H1 (cell line): ENCODE measurements at regions of chr2 and their contacts with region 1.

Region 1: GRCh38 chr2:74147727-74148456 is at the start of gene BOLA3:
- DNase-seq: peak; percentile 49 to 94
- H3K4me3 ChIP-seq: peak within 1 kb of the TSS; percentile 68 to 93 (median 74)
- H3K27ac ChIP-seq: peak within 1 kb of the TSS; percentile 35; the same call in 1 of the 2 replicates
- H3K4me1 ChIP-seq: peaks cover 0 to 8% (median 2%) of the 10 kb centered on the region in 4 experiments; a peak in 4 of 7 replicates
- H3K27me3 ChIP-seq: no peaks in the 10 kb centered on the region
- CTCF ChIP-seq: peak; percentile 55 to 79 (median 58)
- EP300 ChIP-seq: no peak
- POLR2A ChIP-seq: peak; percentile 81 to 91
- RAD21 ChIP-seq: peak; percentile 47 to 53
- total RNA-seq, gene BOLA3: 67.3 and 68.6 TPM in 2 replicates

Region 2: GRCh38 chr2:73828818-73829570 is 318.9 kb before region 1 on chr2 and contains the start of gene STAMBP:
- CTCF ChIA-PET with region 1: interaction called, 11 read pairs
- POLR2A ChIA-PET with region 1: interaction called, 4 read pairs
- DNase-seq: peak; percentile 83 to 97
- H3K4me3 ChIP-seq: peak within 1 kb of the TSS; percentile 75 to 91 (median 89)
- H3K27ac ChIP-seq: peak within 1 kb of the TSS; percentile 85
- H3K4me1 ChIP-seq: peaks cover 0 to 2% (median 0%) of the 10 kb centered on the region in 4 experiments; a peak in 2 of 7 replicates
- H3K27me3 ChIP-seq: peaks cover 0 to 7% (median 1%) of the 10 kb centered on the region in 4 experiments; a peak in 4 of 7 replicates
- CTCF ChIP-seq: peak in 1 of 3 experiments; percentile 2; a peak in 1 of 4 replicates
- EP300 ChIP-seq: no peak
- POLR2A ChIP-seq: peak; percentile 84 to 88
- RAD21 ChIP-seq: no peak
- total RNA-seq, gene STAMBP: 49.7 and 50.5 TPM in 2 replicates

Region 3: DNA sequence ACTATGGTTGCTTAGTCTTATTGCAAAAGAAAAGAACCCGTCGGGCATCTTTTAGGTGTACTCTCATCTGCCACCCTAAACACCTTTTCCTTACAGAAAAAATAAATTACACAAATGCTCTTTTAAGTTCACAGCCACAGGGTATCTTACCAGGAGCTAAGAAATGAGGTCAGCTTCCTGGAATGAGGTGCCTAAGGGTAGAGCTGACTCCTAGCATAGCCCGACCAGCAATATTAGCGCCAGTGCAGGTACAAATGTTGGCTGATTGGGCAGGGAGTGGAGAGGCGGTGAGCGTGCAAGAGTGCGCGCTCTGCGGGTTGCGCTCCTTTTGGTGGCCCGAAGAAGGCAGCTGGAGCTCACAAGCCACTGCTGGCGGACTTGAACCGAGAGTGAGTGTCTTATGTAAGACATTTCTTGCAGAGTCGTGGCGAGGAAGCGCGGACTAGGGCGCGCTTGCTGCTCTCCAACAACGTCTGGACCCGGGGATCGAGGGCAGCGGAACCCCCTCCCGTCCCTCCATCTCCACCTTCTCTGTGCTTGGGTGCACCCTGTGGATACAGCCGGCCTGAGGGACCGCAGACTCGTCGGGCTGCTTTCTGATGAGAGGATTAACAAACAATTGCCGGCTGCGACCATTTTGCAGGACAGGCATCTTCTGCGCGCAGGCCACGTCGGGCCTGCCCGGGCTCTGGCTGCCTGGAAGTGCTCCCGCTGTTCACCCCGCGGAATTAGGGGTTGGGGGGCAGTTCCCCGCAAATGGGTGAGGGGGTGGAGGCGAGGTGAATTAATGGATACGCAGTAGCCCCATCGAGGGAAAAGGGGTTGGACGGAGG is 17.5 kb before region 1 on chr2:
- CTCF ChIA-PET with region 1: interaction called, 48 read pairs
- POLR2A ChIA-PET with region 1: interaction called, 8 read pairs
- DNase-seq: no peak
- H3K4me3 ChIP-seq: no peak overlapping the region
- H3K27ac ChIP-seq: no peak overlapping the region
- H3K4me1 ChIP-seq: no peaks in the 10 kb centered on the region; a peak in 1 of 7 replicates
- H3K27me3 ChIP-seq: no peaks in the 10 kb centered on the region
- CTCF ChIP-seq: no peak
- EP300 ChIP-seq: no peak
- POLR2A ChIP-seq: no peak
- RAD21 ChIP-seq: no peak

Region 4: GRCh38 chr2:74162951-74163350 is 15.1 kb after region 1 on chr2:
- CTCF ChIA-PET with region 1: interaction called, 35 read pairs
- POLR2A ChIA-PET with region 1: interaction called, 13 read pairs
- DNase-seq: no peak
- H3K4me3 ChIP-seq: no peak overlapping the region
- H3K27ac ChIP-seq: no peak overlapping the region
- H3K4me1 ChIP-seq: no peaks in the 10 kb centered on the region
- H3K27me3 ChIP-seq: no peaks in the 10 kb centered on the region
- CTCF ChIP-seq: no peak
- EP300 ChIP-seq: no peak
- POLR2A ChIP-seq: no peak
- RAD21 ChIP-seq: no peak

Region 5: DNA sequence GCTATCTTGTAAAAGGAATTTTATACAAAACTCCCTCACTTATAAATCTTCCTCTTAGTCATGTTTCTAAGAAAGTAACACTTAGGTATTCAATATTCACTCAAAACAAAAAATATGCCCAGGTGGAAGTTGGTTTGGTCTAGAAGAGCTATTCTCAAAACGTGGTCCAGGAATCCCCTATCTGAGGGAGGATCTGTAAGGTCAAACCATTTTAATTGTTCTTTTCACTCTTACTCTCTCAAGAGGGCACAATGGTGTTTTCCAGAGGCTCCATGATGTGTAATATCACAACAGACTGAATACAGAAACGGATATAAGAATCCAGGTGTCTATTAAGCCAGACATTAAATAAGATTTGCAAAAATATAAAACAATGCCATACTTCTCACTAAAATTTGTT is 20.8 kb after region 1 on chr2:
- CTCF ChIA-PET with region 1: interaction called, 35 read pairs
- POLR2A ChIA-PET with region 1: interaction called, 2,699 read pairs
- DNase-seq: no peak
- H3K4me3 ChIP-seq: no peak overlapping the region
- H3K27ac ChIP-seq: no peak overlapping the region
- H3K4me1 ChIP-seq: no peaks in the 10 kb centered on the region
- H3K27me3 ChIP-seq: no peaks in the 10 kb centered on the region
- CTCF ChIP-seq: no peak
- EP300 ChIP-seq: no peak
- POLR2A ChIP-seq: no peak
- RAD21 ChIP-seq: no peak

Region 6: GRCh38 chr2:74198461-74199274 is 50.8 kb after region 1 on chr2 and contains the start of gene MTHFD2:
- CTCF ChIA-PET with region 1: interaction called, 23 read pairs
- POLR2A ChIA-PET with region 1: interaction called, 2,699 read pairs
- DNase-seq: peak; percentile 94 to 95
- H3K4me3 ChIP-seq: peak within 1 kb of the TSS; percentile 85 to 98 (median 89)
- H3K27ac ChIP-seq: peak within 1 kb of the TSS; percentile 97
- H3K4me1 ChIP-seq: peaks cover 0 to 8% (median 3%) of the 10 kb centered on the region in 4 experiments; a peak in 2 of 7 replicates
- H3K27me3 ChIP-seq: no peaks in the 10 kb centered on the region
- CTCF ChIP-seq: peak; percentile 56 to 81 (median 76)
- EP300 ChIP-seq: peak in 1 of 2 experiments; percentile 66; a peak in 1 of 3 replicates
- POLR2A ChIP-seq: peak; percentile 98
- RAD21 ChIP-seq: peak; percentile 26 to 45
- total RNA-seq, gene MTHFD2: 260 and 291 TPM in 2 replicates